Vagina (tissue), 2 donors: ENCODE measurements at regions of chr9 and their contacts with region 1.

Region 1: GRCh38 chr9:83544002-83544698 is 5.9 kb upstream of the FRMD3 start:
- DNase-seq: no peak
- H3K4me3 ChIP-seq: no peak overlapping the region
- H3K27ac ChIP-seq: no peak overlapping the region
- H3K4me1 ChIP-seq: peaks cover under 1% of the 10 kb centered on the region
- H3K27me3 ChIP-seq: no peaks in the 10 kb centered on the region
- CTCF ChIP-seq: peak; percentile 43 to 56 (median 47)
- POLR2A ChIP-seq: no peak

Region 2: GRCh38 chr9:83204047-83204446 is 340.1 kb before region 1 on chr9:
- intact Hi-C with region 1: loop called (anchors 10 kb)
- DNase-seq: no peak
- H3K4me3 ChIP-seq: no peak overlapping the region
- H3K27ac ChIP-seq: no peak overlapping the region
- H3K4me1 ChIP-seq: no peaks in the 10 kb centered on the region
- H3K27me3 ChIP-seq: no peaks in the 10 kb centered on the region
- CTCF ChIP-seq: no peak
- POLR2A ChIP-seq: no peak

Region 3: DNA sequence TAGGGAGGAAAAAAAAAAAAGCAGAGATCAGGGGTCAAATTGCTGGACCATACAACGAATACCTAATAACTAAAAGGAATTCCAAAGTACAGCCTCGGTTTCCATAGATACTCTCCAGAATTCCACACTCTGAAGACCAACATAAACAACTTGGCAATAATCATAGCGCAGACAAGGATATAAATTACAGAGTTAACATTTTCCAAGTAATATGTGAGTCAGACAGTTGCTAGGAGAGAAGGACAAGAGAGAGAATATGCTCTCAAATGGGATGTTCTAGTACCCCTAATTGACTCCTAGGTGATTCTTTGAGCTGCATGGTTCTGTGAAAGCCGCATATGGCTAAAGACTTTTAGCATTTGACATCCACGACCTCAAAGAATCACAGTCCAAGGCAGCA is 171.2 kb before region 1 on chr9:
- intact Hi-C with region 1: no loop called
- DNase-seq: no peak
- H3K4me3 ChIP-seq: no peak overlapping the region
- H3K27ac ChIP-seq: no peak overlapping the region
- H3K4me1 ChIP-seq: no peaks in the 10 kb centered on the region
- H3K27me3 ChIP-seq: no peaks in the 10 kb centered on the region
- CTCF ChIP-seq: no peak
- POLR2A ChIP-seq: no peak